ENCODE measurements at regions of chr10 and their contacts with region 1.

Region 1: GRCh38 chr10:59073456-59074053 is 102.9 kb upstream of the PHYHIPL start:
- DNase-seq: peak; percentile 99
- ATAC-seq: peak; percentile 98
- H3K4me3 ChIP-seq: no peak overlapping the region; a peak in 1 of 6 replicates
- H3K27ac ChIP-seq: peak overlapping the region; percentile 90
- H3K4me1 ChIP-seq: peaks cover 83% of the 10 kb centered on the region
- H3K27me3 ChIP-seq: no peaks in the 10 kb centered on the region
- CTCF ChIP-seq: no peak
- EP300 ChIP-seq: peak; percentile 97 to 100
- POLR2A ChIP-seq: peak in 1 of 2 experiments; percentile 39; a peak in 1 of 4 replicates
- RAD21 ChIP-seq: peak; percentile 36; the same call in 1 of the 2 replicates

Region 2: DNA sequence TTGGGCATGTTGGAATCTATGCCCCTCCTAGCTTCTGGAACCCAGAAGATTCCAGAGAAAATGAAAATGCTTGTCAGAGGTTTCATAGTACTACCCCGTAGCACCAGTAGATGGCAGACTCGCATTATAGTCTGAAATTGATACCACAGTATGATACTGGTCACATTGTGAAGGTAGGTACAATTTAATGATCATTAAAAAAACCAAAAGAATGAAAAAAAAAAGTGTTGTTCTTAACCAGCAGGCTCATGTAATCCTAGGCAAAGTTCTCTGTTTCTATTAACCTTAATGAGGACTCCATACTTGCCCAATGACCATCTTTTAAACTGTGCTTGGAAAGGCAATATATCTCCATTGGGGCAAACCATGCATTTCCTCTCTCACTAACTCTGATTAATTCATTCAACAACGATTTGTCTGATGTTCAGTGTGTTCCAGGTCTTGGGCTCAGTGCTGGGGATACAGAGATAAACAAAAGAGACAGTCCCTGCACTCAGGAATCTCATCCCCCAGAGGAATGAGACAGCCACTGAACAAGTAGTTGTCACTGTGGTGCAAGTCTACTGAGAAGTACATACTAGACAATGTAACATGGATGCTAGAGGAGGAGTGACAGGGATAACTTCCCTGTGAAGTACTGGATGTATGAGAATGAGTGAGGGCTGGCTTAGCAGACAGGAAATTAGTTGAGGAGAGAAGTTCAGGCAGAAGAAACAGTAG is 120.6 kb before region 1 on chr10:
- CTCF ChIA-PET with region 1: no interaction called
- POLR2A ChIA-PET with region 1: interaction called, 4 read pairs
- in situ Hi-C with region 1: no loop called
- intact Hi-C with region 1: loop called (anchors 1 kb)
- DNase-seq: peak; percentile 53
- ATAC-seq: peak; percentile 86
- H3K4me3 ChIP-seq: no peak overlapping the region
- H3K27ac ChIP-seq: no peak overlapping the region
- H3K4me1 ChIP-seq: peaks cover 58% of the 10 kb centered on the region
- H3K27me3 ChIP-seq: no peaks in the 10 kb centered on the region
- CTCF ChIP-seq: peak; percentile 82
- EP300 ChIP-seq: no peak
- POLR2A ChIP-seq: no peak
- RAD21 ChIP-seq: peak; percentile 87

Region 3: DNA sequence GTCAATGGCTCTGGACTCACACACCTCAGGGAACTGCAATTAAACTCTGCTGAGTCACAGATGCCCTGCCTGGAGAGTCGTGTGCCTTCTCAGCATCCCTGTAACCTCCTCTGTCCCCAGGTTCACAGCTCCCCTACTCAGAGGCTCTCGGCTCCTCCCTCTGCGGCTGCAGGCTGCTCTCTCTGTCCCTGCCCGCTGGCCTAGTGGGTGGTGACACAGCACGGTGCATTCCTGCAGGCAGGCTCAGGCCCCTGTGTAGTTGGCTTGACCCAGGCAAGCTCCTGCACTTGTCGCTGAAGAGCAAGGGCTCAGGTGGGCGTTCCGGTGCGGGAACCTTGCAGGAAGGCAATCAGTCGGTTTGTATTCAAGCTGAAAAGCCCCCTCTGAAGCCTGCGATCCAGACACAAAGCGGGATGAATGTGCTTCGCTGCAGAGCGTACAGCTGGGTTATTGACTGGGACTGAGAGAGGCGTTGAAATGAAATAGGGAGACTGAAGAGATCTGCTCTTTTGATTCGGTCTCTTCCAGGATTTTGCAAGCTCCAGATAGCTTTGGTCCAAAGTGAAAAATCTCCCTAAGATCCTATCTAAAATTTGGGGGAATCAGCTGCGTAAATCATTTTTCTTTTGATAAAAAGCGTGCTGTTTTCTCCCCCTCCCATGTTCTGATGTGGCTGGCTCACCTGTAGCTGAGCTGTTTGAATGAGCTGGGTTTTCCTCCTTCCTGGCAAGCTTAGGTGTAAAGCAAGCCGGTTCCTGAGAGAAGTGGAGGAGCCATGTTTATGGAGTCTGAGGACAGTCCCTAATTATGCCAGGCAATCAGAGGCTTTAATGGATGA is 105.8 kb before region 1 on chr10:
- CTCF ChIA-PET with region 1: no interaction called
- POLR2A ChIA-PET with region 1: interaction called, 32 read pairs
- in situ Hi-C with region 1: loop called (anchors 10 kb)
- intact Hi-C with region 1: loop called (anchors 1 kb)
- DNase-seq: peak; percentile 93
- ATAC-seq: peak; percentile 99
- H3K4me3 ChIP-seq: peak overlapping the region; percentile 33 to 72 (median 55)
- H3K27ac ChIP-seq: peak overlapping the region; percentile 77
- H3K4me1 ChIP-seq: peaks cover 84% of the 10 kb centered on the region
- H3K27me3 ChIP-seq: no peaks in the 10 kb centered on the region
- CTCF ChIP-seq: peak; percentile 31; the same call in 1 of the 2 replicates
- EP300 ChIP-seq: peak; percentile 39 to 60; a peak in 3 of 4 replicates
- POLR2A ChIP-seq: peak; percentile 71 to 85
- RAD21 ChIP-seq: peak; percentile 45; the same call in 1 of the 2 replicates

Region 4: GRCh38 chr10:58993480-58994221 is 79.9 kb before region 1 on chr10:
- CTCF ChIA-PET with region 1: no interaction called
- POLR2A ChIA-PET with region 1: interaction called, 15 read pairs
- in situ Hi-C with region 1: no loop called
- intact Hi-C with region 1: no loop called
- DNase-seq: no peak
- ATAC-seq: no peak
- H3K4me3 ChIP-seq: peak overlapping the region in 1 of 3 experiments; percentile 23; a peak in 1 of 6 replicates
- H3K27ac ChIP-seq: peak overlapping the region; percentile 89
- H3K4me1 ChIP-seq: peaks cover 96% of the 10 kb centered on the region
- H3K27me3 ChIP-seq: no peaks in the 10 kb centered on the region
- CTCF ChIP-seq: no peak
- EP300 ChIP-seq: no peak
- POLR2A ChIP-seq: no peak
- RAD21 ChIP-seq: no peak

Region 5: GRCh38 chr10:59036311-59037017 is 37.1 kb before region 1 on chr10:
- CTCF ChIA-PET with region 1: no interaction called
- POLR2A ChIA-PET with region 1: interaction called, 8 read pairs
- in situ Hi-C with region 1: no loop called
- intact Hi-C with region 1: loop called (anchors 2 kb)
- DNase-seq: peak; percentile 75
- ATAC-seq: peak; percentile 94
- H3K4me3 ChIP-seq: peak overlapping the region in 1 of 3 experiments; percentile 29; a peak in 1 of 6 replicates
- H3K27ac ChIP-seq: peak overlapping the region; percentile 87
- H3K4me1 ChIP-seq: peaks cover 66% of the 10 kb centered on the region
- H3K27me3 ChIP-seq: no peaks in the 10 kb centered on the region
- CTCF ChIP-seq: no peak
- EP300 ChIP-seq: 0 out of 4 replicates have a peak, but pooled peaks of 1 of the 2 experiments have one; percentile 14
- POLR2A ChIP-seq: no peak
- RAD21 ChIP-seq: no peak

Region 6: GRCh38 chr10:59060852-59061251 is 12.7 kb before region 1 on chr10:
- CTCF ChIA-PET with region 1: no interaction called
- POLR2A ChIA-PET with region 1: interaction called, 12 read pairs
- in situ Hi-C with region 1: no loop called
- intact Hi-C with region 1: loop called (anchors 1 kb)
- DNase-seq: no peak
- ATAC-seq: no peak
- H3K4me3 ChIP-seq: no peak overlapping the region
- H3K27ac ChIP-seq: no peak overlapping the region
- H3K4me1 ChIP-seq: peaks cover 82% of the 10 kb centered on the region
- H3K27me3 ChIP-seq: no peaks in the 10 kb centered on the region
- CTCF ChIP-seq: no peak
- EP300 ChIP-seq: no peak
- POLR2A ChIP-seq: no peak
- RAD21 ChIP-seq: no peak

Region 7: DNA sequence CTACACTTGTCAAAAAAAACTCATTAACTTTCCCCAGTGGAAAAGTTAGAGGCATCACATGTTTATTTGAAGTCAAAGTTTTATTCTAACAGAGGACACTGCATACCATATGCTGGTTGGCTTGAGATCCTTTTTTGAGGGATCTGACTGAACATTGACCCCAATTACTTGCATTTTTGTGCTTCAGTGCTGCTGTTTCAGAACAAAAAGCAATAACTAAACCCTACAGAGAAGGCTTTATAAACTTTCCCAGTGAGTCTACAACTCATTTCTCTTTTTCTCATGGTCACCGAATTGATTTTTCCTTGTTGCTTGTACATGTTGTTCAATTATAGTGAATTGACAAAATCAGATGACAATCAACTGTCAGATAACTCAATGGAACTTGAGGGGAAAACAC is 33.6 kb after region 1 on chr10:
- CTCF ChIA-PET with region 1: no interaction called
- POLR2A ChIA-PET with region 1: interaction called, 3 read pairs
- in situ Hi-C with region 1: no loop called
- intact Hi-C with region 1: loop called (anchors 5 kb)
- DNase-seq: peak; percentile 78
- ATAC-seq: peak; percentile 87
- H3K4me3 ChIP-seq: no peak overlapping the region
- H3K27ac ChIP-seq: peak overlapping the region; percentile 69
- H3K4me1 ChIP-seq: peaks cover 55% of the 10 kb centered on the region
- H3K27me3 ChIP-seq: no peaks in the 10 kb centered on the region
- CTCF ChIP-seq: no peak
- EP300 ChIP-seq: 0 out of 4 replicates have a peak, but pooled peaks of 1 of the 2 experiments have one; percentile 15
- POLR2A ChIP-seq: no peak
- RAD21 ChIP-seq: no peak

Measured in HepG2 (cell line).